ENCODE measurements at regions of chr1 and their contacts with region 1.

Region 1: GRCh38 chr1:192609110-192610079 is 26.6 kb upstream of the RGS13 start:
- DNase-seq: peak; percentile 96
- ATAC-seq: peak; percentile 90
- H3K4me3 ChIP-seq: peak overlapping the region; percentile 8; the same call in 1 of the 2 replicates
- H3K27ac ChIP-seq: peak overlapping the region; percentile 88
- H3K4me1 ChIP-seq: peaks cover 23% of the 10 kb centered on the region
- H3K27me3 ChIP-seq: no peaks in the 10 kb centered on the region
- CTCF ChIP-seq: peak in 2 of 3 experiments; percentile 6 to 55; a peak in 3 of 6 replicates
- EP300 ChIP-seq: peak; percentile 98 to 100
- POLR2A ChIP-seq: no peak
- RAD21 ChIP-seq: peak; percentile 60; the same call in 1 of the 2 replicates

Region 2: DNA sequence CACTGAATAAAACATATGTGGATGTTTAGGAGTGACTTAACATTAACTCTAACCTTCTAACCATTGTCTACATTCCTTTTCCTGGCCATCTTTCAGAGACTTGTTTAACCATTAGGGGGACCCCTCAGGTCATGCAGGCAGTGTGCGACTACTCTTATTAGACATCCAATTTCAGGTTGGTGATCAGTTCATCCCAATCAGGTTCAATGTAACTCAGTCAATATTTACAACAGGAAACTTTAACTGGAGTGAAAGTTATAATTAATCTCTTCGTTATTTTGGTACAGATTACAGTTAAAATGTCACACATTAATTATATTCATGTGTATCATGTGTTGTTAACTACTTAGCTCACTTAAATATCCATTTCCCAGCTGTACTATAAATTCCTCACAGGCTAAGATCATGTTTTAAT is 102.6 kb before region 1 on chr1:
- CTCF ChIA-PET with region 1: interaction called, 58 read pairs
- POLR2A ChIA-PET with region 1: interaction called, 5 read pairs
- RAD21 ChIA-PET with region 1: interaction called, 62 read pairs
- SMC1A ChIA-PET with region 1: interaction called, 58 read pairs
- in situ Hi-C with region 1: no loop called
- intact Hi-C with region 1: loop called (anchors 1 kb)
- DNase-seq: peak; percentile 66
- ATAC-seq: peak; percentile 99
- H3K4me3 ChIP-seq: no peak overlapping the region
- H3K27ac ChIP-seq: no peak overlapping the region
- H3K4me1 ChIP-seq: no peaks in the 10 kb centered on the region; the same call in 1 of the 2 replicates
- H3K27me3 ChIP-seq: no peaks in the 10 kb centered on the region
- CTCF ChIP-seq: peak; percentile 69 to 93 (median 70); a peak in 5 of 6 replicates
- EP300 ChIP-seq: no peak
- POLR2A ChIP-seq: no peak
- RAD21 ChIP-seq: peak; percentile 98

Region 3: GRCh38 chr1:192545896-192546521 is 63.4 kb before region 1 on chr1:
- CTCF ChIA-PET with region 1: interaction called, 16 read pairs
- POLR2A ChIA-PET with region 1: interaction called, 5 read pairs
- RAD21 ChIA-PET with region 1: interaction called, 37 read pairs
- SMC1A ChIA-PET with region 1: interaction called, 59 read pairs
- in situ Hi-C with region 1: loop called (anchors 5 kb)
- intact Hi-C with region 1: loop called (anchors 1 kb)
- DNase-seq: peak; percentile 87
- ATAC-seq: peak; percentile 67
- H3K4me3 ChIP-seq: no peak overlapping the region; the same call in 1 of the 2 replicates
- H3K27ac ChIP-seq: peak overlapping the region; percentile 84
- H3K4me1 ChIP-seq: peaks cover 53% of the 10 kb centered on the region
- H3K27me3 ChIP-seq: no peaks in the 10 kb centered on the region
- CTCF ChIP-seq: peak in 2 of 3 experiments; percentile 37 to 41; a peak in 2 of 6 replicates
- EP300 ChIP-seq: peak in 1 of 2 experiments; percentile 39; a peak in 1 of 4 replicates
- POLR2A ChIP-seq: 0 out of 2 replicates have a peak, but pooled peaks have one; percentile 34
- RAD21 ChIP-seq: peak; percentile 29; the same call in 1 of the 2 replicates

Region 4: GRCh38 chr1:192580351-192580962 is 28.9 kb before region 1 on chr1:
- CTCF ChIA-PET with region 1: interaction called, 18 read pairs
- POLR2A ChIA-PET with region 1: interaction called, 9 read pairs
- RAD21 ChIA-PET with region 1: interaction called, 65 read pairs
- SMC1A ChIA-PET with region 1: interaction called, 175 read pairs
- in situ Hi-C with region 1: no loop called
- intact Hi-C with region 1: loop called (anchors 1 kb)
- DNase-seq: peak; percentile 81
- ATAC-seq: peak; percentile 33
- H3K4me3 ChIP-seq: peak overlapping the region; percentile 31; the same call in 1 of the 2 replicates
- H3K27ac ChIP-seq: no peak overlapping the region
- H3K4me1 ChIP-seq: no peaks in the 10 kb centered on the region
- H3K27me3 ChIP-seq: no peaks in the 10 kb centered on the region
- CTCF ChIP-seq: peak; percentile 29 to 70 (median 55); a peak in 5 of 6 replicates
- EP300 ChIP-seq: peak in 1 of 2 experiments; percentile 60; a peak in 2 of 4 replicates
- POLR2A ChIP-seq: peak; percentile 70; the same call in 1 of the 2 replicates
- RAD21 ChIP-seq: peak; percentile 95

Region 5: GRCh38 chr1:192639607-192640368 is 30.4 kb after region 1 on chr1:
- CTCF ChIA-PET with region 1: interaction called, 3 read pairs
- POLR2A ChIA-PET with region 1: no interaction called
- RAD21 ChIA-PET with region 1: interaction called, 13 read pairs
- SMC1A ChIA-PET with region 1: interaction called, 11 read pairs
- in situ Hi-C with region 1: no loop called
- intact Hi-C with region 1: no loop called
- DNase-seq: peak; percentile 51
- ATAC-seq: peak; percentile 83
- H3K4me3 ChIP-seq: no peak overlapping the region
- H3K27ac ChIP-seq: no peak overlapping the region
- H3K4me1 ChIP-seq: peaks cover 8% of the 10 kb centered on the region
- H3K27me3 ChIP-seq: no peaks in the 10 kb centered on the region; a peak in 2 of 4 replicates
- CTCF ChIP-seq: no peak
- EP300 ChIP-seq: 0 out of 4 replicates have a peak, but pooled peaks of 1 of the 2 experiments have one; percentile 8
- POLR2A ChIP-seq: no peak
- RAD21 ChIP-seq: no peak

Region 6: DNA sequence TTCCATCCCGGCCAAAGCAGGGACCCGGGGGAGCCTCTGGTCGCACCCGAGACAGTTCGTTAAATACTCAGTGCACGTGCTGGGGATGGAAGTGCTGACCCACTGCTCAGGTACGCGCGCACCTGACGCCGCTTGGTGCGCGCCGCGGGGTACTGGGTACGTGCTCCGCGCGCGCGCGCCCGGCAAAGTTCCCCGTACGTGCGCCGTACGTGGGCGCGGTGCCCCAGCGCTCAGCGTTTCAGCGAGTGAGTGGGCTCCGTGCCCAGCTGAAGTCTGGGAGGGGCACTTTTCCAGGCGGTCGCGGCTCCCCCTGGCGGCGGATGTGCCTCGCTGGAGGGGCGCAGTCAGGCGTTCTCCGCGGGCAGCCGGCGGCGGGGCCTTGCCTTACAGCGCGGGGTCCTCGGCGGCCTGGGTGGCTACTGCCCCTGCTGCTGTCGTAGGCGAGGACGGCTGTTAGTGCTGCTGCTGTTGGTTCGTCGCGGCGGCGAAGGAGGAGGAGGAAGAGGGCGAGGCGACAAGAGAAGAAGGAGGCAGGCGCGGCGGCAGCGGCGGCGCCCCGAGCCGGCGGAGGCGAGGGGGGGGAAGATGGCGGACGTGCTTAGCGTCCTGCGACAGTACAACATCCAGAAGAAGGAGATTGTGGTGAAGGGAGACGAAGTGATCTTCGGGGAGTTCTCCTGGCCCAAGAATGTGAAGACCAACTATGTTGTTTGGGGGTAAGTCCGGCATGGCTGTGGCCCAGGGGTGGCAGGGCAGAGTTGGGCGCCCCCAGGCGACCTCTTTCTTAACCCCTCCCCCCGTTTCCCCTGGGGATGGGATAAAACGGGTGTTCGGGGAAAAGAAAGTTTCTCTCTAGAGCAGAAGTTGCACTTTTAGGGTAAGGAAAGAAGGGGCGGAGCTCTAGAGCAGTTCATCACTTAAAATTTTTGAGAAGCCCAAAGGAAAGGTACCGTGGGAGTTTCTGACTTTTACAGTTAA is 512.5 kb after region 1 on chr1 and contains the start of gene CDC73:
- CTCF ChIA-PET with region 1: interaction called, 4 read pairs
- POLR2A ChIA-PET with region 1: interaction called, 3 read pairs
- RAD21 ChIA-PET with region 1: no interaction called
- SMC1A ChIA-PET with region 1: interaction called, 4 read pairs
- in situ Hi-C with region 1: no loop called
- intact Hi-C with region 1: loop called (anchors 5 kb)
- DNase-seq: peak; percentile 89
- ATAC-seq: peak; percentile 93
- H3K4me3 ChIP-seq: peak within 1 kb of the TSS; percentile 91
- H3K27ac ChIP-seq: peak within 1 kb of the TSS; percentile 92
- H3K4me1 ChIP-seq: no peaks in the 10 kb centered on the region; the same call in 1 of the 2 replicates
- H3K27me3 ChIP-seq: no peaks in the 10 kb centered on the region
- CTCF ChIP-seq: peak; percentile 87 to 96 (median 88)
- EP300 ChIP-seq: peak in 1 of 2 experiments; percentile 25; a peak in 1 of 4 replicates
- POLR2A ChIP-seq: peak; percentile 97
- RAD21 ChIP-seq: peak; percentile 74
- polyA plus RNA-seq, gene CDC73: 21.0 to 21.3 TPM

Measured in GM12878 (cell line).